Left lung (tissue), 14 donors: ENCODE measurements at regions of chr11 and their contacts with region 1.

Region 1: DNA sequence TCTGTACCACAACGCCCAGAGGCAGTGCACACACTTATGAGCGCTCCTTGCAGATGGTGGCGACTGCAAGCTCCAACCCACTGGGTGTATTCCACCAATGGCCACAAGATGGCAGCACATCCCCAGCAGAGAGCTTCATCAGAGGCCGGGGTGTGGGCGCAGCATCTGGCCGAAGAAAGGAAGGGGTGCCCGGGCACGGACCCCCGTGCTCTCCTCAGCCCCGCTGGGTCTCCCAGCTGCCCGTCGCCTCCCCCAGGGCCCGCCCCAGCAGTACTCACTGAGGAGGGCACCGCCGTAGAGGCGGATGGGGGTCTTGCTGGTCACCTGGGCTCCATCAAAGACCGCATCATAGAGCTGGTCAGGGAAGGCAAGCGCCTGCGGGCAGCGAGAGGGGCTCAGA is 14.2 kb downstream of the TP53I11 start:
- DNase-seq: peak; percentile 76 to 90 (median 84)
- ATAC-seq: peak; percentile 95
- H3K4me3 ChIP-seq: no peak overlapping the region
- H3K27ac ChIP-seq: no peak overlapping the region
- H3K4me1 ChIP-seq: peaks cover 0 to 15% of the 10 kb centered on the region in 2 donors
- H3K27me3 ChIP-seq: no peaks in the 10 kb centered on the region
- CTCF ChIP-seq: peak; percentile 98

Region 2: DNA sequence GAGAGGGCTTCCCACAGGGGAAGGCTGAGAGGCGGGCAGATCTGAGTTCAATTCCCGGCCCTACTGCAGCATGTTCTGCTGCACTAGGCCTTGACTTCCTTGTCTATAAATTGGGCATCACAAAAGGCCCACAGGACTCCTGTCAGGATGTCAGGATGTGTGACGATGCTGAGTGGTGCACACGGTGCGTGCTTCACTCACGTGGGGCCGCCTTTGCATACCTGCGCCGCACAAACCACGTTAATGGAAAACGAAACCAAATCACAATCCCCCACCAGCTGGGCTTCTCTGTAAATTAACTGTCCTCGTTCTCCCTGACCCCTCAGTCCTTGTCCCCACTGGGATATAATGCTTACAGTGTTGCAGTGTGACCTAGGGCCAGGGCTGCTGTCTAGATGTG is 242.1 kb before region 1 on chr11:
- intact Hi-C with region 1: no loop called
- DNase-seq: no peak
- ATAC-seq: no peak
- H3K4me3 ChIP-seq: no peak overlapping the region
- H3K27ac ChIP-seq: no peak overlapping the region
- H3K4me1 ChIP-seq: no peaks in the 10 kb centered on the region
- H3K27me3 ChIP-seq: no peaks in the 10 kb centered on the region
- CTCF ChIP-seq: no peak

Region 3: DNA sequence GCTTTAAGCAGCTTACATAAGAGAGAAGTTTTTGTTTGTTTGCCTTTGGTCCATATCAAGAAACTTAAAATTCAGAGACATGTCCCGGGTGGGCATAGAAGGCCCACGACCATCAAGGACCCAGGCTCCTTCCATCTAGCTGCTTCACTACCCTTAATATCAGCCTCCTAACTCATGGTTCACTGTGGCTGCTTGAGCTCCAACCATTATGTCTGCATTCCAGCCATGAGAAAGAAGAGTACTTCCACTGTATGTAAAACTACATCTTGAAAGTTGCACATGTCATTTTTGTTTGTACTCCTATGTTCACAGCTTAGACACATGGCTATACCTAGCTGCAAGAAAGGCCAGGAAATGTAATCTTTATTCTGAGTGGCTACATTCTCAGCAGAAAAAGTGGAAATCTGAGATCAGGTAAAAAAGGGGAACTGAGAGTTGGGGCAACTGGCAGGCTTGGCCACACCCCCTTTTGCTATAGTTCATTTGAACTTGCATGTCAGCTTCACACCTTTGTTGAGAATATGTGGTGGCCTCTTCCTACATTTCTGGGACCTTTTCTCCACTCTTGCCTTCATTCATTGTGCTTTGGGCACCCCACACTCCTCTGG is 95.5 kb after region 1 on chr11:
- intact Hi-C with region 1: no loop called
- DNase-seq: no peak
- ATAC-seq: no peak
- H3K4me3 ChIP-seq: no peak overlapping the region
- H3K27ac ChIP-seq: no peak overlapping the region
- H3K4me1 ChIP-seq: no peaks in the 10 kb centered on the region
- H3K27me3 ChIP-seq: no peaks in the 10 kb centered on the region
- CTCF ChIP-seq: no peak

Region 4: GRCh38 chr11:45298718-45299117 is 362.2 kb after region 1 on chr11:
- intact Hi-C with region 1: loop called in 1 of 2 experiments (anchors 10 kb)
- DNase-seq: no peak
- ATAC-seq: no peak
- H3K4me3 ChIP-seq: no peak overlapping the region
- H3K27ac ChIP-seq: no peak overlapping the region
- H3K4me1 ChIP-seq: no peaks in the 10 kb centered on the region
- H3K27me3 ChIP-seq: no peaks in the 10 kb centered on the region
- CTCF ChIP-seq: no peak